HepG2 (cell line): ENCODE measurements at regions of chr9 and their contacts with region 1.

Region 1: DNA sequence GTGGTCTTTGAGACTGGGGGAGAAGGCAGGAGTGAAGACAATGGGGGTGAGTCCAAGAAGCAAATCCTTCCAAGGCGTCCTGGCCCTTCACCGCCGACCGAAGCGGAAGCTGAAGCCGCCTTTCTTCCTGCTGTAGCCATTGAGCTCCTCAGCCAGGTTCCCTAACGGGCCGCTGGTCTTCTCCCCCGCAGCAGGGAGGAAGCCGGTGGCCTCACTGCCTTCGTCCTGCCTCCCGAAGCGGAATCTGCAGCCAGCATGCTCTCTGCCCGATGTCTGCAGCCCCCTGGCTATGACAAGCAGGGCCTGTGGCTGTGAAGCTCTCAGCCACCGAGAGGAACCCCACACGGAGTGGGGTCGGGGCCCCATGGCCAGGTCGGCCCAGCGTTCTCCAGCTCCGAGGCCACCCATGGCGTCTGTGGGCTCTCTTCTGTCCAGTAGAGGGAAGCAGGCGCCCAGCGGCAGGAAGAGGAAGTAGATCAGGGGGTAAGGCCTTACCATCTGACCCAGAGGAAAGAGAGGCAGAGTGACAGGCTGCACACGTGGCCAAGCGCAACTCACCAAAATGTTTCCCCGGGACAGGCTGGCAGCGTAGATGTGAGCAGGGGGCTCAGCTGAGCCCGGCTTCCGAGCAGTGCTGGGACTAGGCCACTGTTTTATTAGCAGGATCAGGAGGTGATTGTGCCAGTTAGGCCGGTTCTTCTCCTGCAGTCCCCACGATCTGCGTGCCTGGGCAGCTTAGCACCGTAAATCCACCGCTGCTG is 3.1 kb downstream of the QRFP start:
- DNase-seq: no peak
- ATAC-seq: peak; percentile 10
- H3K4me3 ChIP-seq: no peak overlapping the region
- H3K27ac ChIP-seq: no peak overlapping the region
- H3K4me1 ChIP-seq: no peaks in the 10 kb centered on the region
- H3K27me3 ChIP-seq: peaks cover 6 to 24% of the 10 kb centered on the region in 2 experiments; a peak in 3 of 5 replicates
- CTCF ChIP-seq: peak; percentile 37; the same call in 1 of the 2 replicates
- EP300 ChIP-seq: no peak
- POLR2A ChIP-seq: no peak
- RAD21 ChIP-seq: no peak

Region 2: GRCh38 chr9:129617167-129617566 is 1276.4 kb before region 1 on chr9:
- CTCF ChIA-PET with region 1: no interaction called
- POLR2A ChIA-PET with region 1: no interaction called
- in situ Hi-C with region 1: no loop called
- intact Hi-C with region 1: no loop called
- DNase-seq: no peak
- ATAC-seq: peak; percentile 39
- H3K4me3 ChIP-seq: no peak overlapping the region
- H3K27ac ChIP-seq: no peak overlapping the region
- H3K4me1 ChIP-seq: peaks cover 20% of the 10 kb centered on the region
- H3K27me3 ChIP-seq: peaks cover 0 to 15% of the 10 kb centered on the region in 2 experiments; a peak in 3 of 5 replicates
- CTCF ChIP-seq: peak; percentile 75
- EP300 ChIP-seq: no peak
- POLR2A ChIP-seq: no peak
- RAD21 ChIP-seq: peak; percentile 35; the same call in 1 of the 2 replicates

Region 3: GRCh38 chr9:130927995-130928900 is 34.7 kb after region 1 on chr9:
- CTCF ChIA-PET with region 1: no interaction called
- POLR2A ChIA-PET with region 1: no interaction called
- in situ Hi-C with region 1: no loop called
- intact Hi-C with region 1: no loop called
- DNase-seq: peak; percentile 70
- ATAC-seq: peak; percentile 20
- H3K4me3 ChIP-seq: peak overlapping the region in 1 of 3 experiments; percentile 33; a peak in 1 of 6 replicates
- H3K27ac ChIP-seq: no peak overlapping the region
- H3K4me1 ChIP-seq: peaks cover 26% of the 10 kb centered on the region
- H3K27me3 ChIP-seq: peaks cover 20 to 98% of the 10 kb centered on the region in 2 experiments
- CTCF ChIP-seq: no peak
- EP300 ChIP-seq: no peak
- POLR2A ChIP-seq: no peak
- RAD21 ChIP-seq: no peak

Region 4: DNA sequence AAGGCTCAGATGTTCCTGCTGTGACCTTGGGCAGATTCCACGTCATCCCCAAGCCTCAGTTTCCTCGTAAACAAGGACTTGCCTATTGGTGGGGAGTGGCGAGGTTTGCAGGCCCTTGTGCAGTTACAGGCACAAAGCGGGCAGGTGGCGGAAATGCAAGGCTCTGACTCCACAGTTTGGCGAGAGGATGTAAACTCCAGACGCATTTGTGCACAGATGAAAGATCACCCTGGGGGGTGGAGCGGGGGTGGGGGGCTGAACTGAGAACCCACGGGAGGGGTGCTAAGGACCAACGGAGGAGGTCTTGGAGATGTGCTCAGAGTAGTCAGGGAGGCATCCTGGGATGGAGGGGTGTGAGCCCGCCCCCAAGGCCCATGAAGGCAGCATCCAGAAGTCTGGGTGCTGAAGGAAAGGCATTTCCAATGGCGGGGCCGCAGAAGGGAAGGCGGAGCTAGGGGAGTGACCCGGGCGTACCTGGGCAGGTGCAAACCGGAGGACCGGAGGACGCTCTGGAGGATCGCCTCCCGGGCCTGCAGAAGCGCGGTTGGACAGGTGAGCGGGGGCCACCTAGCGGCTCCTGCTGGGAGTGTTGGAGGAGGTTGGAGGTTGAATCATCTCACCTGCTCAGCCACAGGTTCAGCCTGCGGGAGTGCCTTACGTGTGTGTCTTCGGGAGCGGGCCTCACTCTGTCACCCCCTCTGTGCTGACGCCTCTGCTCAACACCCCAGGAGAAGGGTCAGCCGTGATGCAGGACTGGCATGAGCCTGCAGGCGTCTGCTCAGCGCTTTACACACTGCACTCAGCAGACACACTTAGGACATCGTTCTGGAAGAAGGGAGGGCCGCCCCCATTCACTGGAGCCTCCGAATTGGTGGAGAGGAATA is 47.4 kb after region 1 on chr9:
- CTCF ChIA-PET with region 1: interaction called, 13 read pairs
- POLR2A ChIA-PET with region 1: no interaction called
- in situ Hi-C with region 1: loop called (anchors 5 kb)
- intact Hi-C with region 1: loop called (anchors 1 kb)
- DNase-seq: peak; percentile 47
- ATAC-seq: peak; percentile 75
- H3K4me3 ChIP-seq: no peak overlapping the region
- H3K27ac ChIP-seq: no peak overlapping the region
- H3K4me1 ChIP-seq: peaks cover 24% of the 10 kb centered on the region
- H3K27me3 ChIP-seq: peaks cover 11 to 87% of the 10 kb centered on the region in 2 experiments
- CTCF ChIP-seq: peak; percentile 94
- EP300 ChIP-seq: no peak
- POLR2A ChIP-seq: no peak
- RAD21 ChIP-seq: peak; percentile 87